H1 (cell line): ENCODE measurements at regions of chr22 and their contacts with region 1.

Region 1: DNA sequence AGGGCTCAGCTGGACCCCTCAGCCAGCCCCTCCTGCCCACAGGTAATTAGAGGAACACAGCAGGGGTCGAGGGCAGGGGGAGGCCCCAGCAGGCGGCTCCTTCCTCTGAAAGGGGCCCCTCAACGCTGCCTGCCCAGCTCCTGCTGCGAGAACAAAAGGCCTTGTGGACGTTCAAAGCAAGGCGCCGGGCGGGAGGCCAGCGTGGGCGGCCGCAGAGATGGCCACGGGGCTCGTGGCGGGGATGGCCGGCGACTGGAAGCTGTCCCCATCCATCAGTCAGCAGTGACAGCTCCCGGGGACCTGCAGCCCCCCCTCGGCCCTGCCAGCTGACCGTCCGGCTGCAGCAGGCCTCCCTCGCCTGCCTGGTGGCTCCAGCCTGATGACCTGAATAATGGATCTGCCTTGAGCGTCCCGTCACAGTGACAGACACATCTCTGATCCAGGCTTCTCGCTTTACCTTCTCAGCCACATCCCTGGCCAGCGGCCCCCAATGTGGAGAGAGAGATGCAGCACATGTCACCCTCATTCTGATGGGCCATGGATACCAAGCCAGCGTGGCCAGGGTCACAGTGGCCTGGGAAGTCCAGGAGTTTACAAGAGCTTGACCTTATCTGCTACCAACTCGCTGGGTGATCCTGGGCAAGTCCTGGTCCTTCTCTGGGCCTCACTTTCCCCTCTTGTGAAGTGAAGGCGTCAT is 159.3 kb downstream of the MN1 start:
- DNase-seq: no peak
- H3K4me3 ChIP-seq: no peak overlapping the region
- H3K27ac ChIP-seq: no peak overlapping the region
- H3K4me1 ChIP-seq: peaks cover 9 to 36% (median 23%) of the 10 kb centered on the region in 4 experiments
- H3K27me3 ChIP-seq: no peaks in the 10 kb centered on the region; a peak in 1 of 7 replicates
- CTCF ChIP-seq: no peak
- EP300 ChIP-seq: no peak
- POLR2A ChIP-seq: no peak
- RAD21 ChIP-seq: no peak

Region 2: GRCh38 chr22:27100789-27101188 is 541.5 kb before region 1 on chr22:
- CTCF ChIA-PET with region 1: no interaction called
- POLR2A ChIA-PET with region 1: no interaction called
- DNase-seq: peak in 1 of 2 experiments; percentile 61
- H3K4me3 ChIP-seq: peak overlapping the region in 1 of 4 experiments; percentile 48; a peak in 3 of 8 replicates
- H3K27ac ChIP-seq: no peak overlapping the region
- H3K4me1 ChIP-seq: peaks cover 4 to 16% (median 12%) of the 10 kb centered on the region in 4 experiments
- H3K27me3 ChIP-seq: peaks cover 0 to 5% (median 1%) of the 10 kb centered on the region in 4 experiments; a peak in 3 of 7 replicates
- CTCF ChIP-seq: no peak
- EP300 ChIP-seq: no peak
- POLR2A ChIP-seq: no peak
- RAD21 ChIP-seq: no peak

Region 3: GRCh38 chr22:27603800-27604144 is 38.5 kb before region 1 on chr22:
- CTCF ChIA-PET with region 1: no interaction called
- POLR2A ChIA-PET with region 1: no interaction called
- DNase-seq: no peak
- H3K4me3 ChIP-seq: no peak overlapping the region
- H3K27ac ChIP-seq: no peak overlapping the region
- H3K4me1 ChIP-seq: peaks cover 0 to 4% (median 1%) of the 10 kb centered on the region in 4 experiments; a peak in 3 of 7 replicates
- H3K27me3 ChIP-seq: 0 out of 7 replicates have a peak, but pooled peaks cover 0 to 2% (median 0%) of the 10 kb centered on the region in 4 experiments
- CTCF ChIP-seq: no peak
- EP300 ChIP-seq: no peak
- POLR2A ChIP-seq: no peak
- RAD21 ChIP-seq: peak in 1 of 2 experiments; percentile 14; a peak in 1 of 4 replicates

Region 4: DNA sequence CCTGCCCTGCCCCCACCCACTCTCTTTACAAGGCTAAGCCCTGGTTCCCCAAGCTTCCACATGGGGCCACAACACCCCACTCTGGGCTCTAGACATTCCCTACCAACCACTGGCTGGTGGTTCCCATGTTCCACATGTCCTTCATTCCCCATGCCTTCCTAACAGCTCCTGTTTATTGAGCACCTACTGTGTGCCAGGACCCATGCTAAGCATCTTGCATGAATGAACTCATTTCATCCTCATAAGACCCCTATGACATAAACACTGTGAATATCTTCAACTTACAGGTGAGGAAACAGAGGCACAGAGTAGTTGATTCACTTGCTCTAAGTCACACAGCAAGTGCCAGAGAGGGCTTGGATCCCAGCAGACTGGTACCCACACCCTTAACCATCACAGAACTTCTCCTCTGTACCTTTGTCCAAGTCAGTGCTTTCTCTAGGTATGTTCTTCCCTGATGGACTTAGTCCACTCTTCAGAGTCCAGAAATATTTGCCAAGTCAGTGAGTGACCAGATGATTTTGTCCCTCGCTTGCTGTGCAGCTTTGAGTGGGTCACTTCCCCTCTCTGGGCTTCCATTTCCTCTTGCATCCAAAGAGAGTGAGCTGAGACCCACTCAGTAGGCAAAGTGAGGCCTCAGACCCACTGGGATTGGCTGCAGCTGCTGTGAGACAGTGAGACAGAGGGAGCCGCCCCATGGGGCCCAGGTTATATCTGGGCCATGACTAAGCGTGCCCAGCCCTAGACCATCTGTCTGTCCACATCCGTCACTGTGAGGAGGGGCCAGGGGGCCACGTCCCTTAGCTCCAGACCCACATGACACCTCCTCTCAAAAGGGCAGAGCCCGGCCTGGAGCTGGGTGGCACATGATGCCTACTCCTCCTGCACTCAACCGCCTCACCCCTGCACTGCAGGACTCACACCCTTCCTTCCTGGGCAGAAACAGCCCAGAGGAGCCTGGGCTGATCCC is 26.9 kb after region 1 on chr22:
- CTCF ChIA-PET with region 1: interaction called, 11 read pairs
- POLR2A ChIA-PET with region 1: interaction called, 4 read pairs
- DNase-seq: no peak
- H3K4me3 ChIP-seq: no peak overlapping the region
- H3K27ac ChIP-seq: 0 out of 2 replicates have a peak overlapping the region, but pooled peaks have one; percentile 17
- H3K4me1 ChIP-seq: peaks cover 8 to 23% (median 17%) of the 10 kb centered on the region in 4 experiments
- H3K27me3 ChIP-seq: no peaks in the 10 kb centered on the region
- CTCF ChIP-seq: no peak
- EP300 ChIP-seq: no peak
- POLR2A ChIP-seq: no peak
- RAD21 ChIP-seq: no peak